Posterior cingulate gyrus (tissue), 11 donors: ENCODE measurements at regions of chr12 and their contacts with region 1.

Region 1: DNA sequence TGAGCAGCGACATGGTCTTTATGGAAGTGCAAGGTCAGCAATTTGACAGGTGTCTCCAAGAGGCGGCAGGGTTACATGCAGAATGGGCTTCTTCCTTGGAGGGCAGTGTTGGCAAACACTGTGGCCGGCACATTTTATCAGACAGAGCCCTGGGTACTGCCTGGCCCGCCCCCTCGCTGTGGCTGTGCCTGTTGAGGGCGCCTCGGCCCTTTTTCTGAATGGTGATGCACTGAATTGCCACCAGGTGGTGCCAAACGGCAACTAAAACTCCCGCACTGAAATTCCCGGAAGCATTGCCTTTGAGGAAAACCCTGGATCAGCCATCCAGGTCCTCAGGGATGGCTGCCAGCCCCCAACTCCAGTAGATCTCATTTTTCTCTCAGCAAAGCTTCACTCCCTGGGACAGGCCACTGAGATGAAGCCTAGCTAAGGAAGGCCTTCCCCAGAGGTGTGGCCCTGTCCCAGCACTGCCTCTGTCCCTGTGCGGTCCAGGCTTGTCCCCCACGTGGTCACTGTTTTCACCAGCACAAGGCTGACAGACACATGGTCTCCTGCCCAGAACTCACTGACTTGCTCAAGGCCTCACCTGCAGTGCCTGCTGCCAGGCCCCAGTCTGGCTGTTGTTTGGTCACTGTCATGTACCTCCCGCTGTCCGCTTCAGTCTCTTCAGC is 73.6 kb downstream of the TESC start:
- DNase-seq: peak; percentile 57 to 95 (median 70)

Region 2: DNA sequence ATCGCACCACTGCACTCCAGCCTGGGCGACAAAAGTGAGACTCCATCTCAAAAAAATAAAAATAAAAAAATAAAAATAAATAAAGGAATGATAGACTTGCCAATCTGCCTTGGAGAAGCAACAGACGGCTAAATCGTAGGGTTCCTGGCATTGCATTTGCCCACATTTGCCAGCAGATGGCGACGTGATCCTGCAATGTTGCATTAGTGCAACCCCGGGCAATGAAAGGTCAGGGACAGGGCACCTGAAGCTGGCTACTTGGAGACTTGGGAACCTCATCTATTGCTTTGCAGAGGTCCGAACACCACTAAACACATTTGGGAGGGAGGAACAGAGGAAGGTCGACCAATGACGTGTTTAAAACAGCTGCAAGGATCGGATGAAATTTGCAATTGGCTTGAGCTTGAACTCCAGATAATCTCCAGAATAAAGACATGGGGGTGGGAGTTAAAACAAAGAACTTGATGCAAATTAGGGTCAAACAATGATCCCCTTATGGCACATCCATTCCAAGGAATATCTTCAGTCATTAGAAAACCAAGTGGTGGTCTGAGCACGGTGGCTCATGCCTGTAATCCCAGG is 322.3 kb before region 1 on chr12:
- intact Hi-C with region 1: no loop called
- DNase-seq: peak in 9 of 10 donors; percentile 49 to 95 (median 78)

Region 3: DNA sequence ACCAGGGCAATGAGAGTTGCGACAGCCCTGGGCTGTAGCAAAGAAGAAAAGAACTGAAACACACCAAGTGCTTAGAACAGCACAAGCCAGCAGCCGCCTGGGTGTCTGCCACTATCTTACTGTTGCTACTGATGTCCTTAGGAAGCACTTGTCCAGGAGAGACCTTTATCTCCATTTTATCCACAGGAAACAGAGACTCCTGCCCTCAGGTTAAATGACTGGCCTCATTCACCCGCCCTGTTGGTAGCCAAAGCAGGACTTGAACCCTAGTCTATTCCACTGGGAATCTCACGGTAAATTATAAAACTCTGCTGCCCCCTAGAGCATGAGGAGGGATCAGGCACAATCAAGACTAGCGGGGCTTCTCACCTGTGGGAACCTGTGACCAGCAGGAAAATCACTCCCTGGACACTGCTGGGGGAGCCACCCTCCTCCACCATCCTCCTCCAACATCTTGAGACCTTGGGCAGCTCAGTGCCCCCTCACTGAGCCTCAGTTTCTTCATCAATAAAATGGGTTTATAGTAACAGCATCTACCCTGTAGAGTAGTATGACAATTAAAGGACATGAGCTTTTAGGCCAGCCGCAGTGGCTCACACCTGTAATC is 94.1 kb after region 1 on chr12:
- intact Hi-C with region 1: loop called (anchors 1 kb)
- DNase-seq: peak in 2 of 10 donors; percentile 44 to 73

Region 4: DNA sequence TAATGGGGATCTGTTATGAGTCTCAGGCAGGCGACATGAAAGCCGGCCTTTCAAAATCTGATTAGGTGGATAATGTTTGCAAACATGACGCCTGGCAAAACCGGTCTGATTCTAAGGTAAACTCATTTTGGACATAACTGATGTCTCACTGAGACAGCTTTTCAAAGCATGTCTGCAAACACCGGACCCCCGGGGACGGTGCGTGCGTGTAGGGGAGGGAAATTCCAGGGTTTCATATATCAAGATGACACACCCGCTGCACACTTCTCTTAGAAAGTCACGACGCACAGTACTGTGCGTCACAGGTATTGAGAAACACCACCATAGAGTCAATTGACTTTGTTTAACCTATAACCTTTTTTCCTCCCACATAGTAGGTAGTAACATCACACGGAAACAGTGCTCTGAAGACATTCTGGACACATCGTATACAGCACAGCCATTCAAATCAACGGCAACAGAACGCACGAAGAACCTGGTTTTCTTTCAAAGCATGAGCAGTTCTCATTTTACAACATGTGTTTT is 117.5 kb after region 1 on chr12:
- intact Hi-C with region 1: loop called (anchors 10 kb)
- DNase-seq: peak in 1 of 10 donors; percentile 56

Region 5: DNA sequence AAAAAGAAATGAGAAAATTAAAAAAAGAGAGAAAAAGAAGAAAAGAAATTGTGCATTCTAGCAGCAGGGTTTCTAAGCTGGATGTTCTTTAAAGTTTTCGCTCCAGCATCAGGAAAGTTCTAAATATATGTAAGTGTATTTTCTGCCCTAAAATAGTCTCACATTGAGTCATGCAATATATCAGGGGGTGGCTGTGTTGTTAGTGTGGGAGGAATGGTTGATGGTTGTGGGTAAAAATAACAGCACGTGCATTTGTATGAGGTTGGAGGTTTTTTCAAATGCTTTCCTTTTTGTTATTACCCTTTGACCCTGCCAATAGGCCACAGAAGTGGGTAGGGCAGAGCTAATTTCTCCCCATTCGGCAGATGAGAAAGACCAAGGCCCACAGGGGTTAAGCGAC is 229.8 kb after region 1 on chr12:
- intact Hi-C with region 1: no loop called
- DNase-seq: no peak